Esophagus squamous epithelium (tissue), 5 donors: ENCODE measurements at regions of chr16 and their contacts with region 1.

Region 1: GRCh38 chr16:12067714-12068401 is 91.3 kb downstream of the SNX29 start:
- DNase-seq: no peak
- H3K4me3 ChIP-seq: no peak overlapping the region
- H3K27ac ChIP-seq: no peak overlapping the region
- H3K4me1 ChIP-seq: peaks cover 6 to 17% (median 9%) of the 10 kb centered on the region in 3 donors
- H3K27me3 ChIP-seq: no peaks in the 10 kb centered on the region
- CTCF ChIP-seq: peak; percentile 64 to 97 (median 94)
- POLR2A ChIP-seq: no peak

Region 2: DNA sequence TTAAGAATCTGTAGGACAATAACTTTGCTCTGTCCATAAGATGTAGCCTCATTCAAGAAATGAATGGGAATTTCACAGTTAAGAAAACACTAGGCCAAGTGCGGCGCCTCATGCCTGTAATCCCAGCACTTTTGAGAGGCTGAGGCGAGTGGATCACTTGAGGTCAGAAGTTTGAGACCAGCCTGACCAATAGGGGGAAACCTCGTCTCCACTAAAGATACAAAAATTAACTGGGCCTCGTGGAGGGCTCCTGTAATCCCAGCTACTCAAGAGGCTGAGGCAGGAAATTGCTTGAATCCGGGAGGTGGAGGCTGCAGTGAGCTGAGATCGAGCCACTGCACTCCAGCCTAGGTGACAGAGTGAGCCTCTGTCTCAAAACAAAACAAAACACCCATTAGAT is 196.7 kb before region 1 on chr16:
- intact Hi-C with region 1: no loop called
- DNase-seq: no peak
- H3K4me3 ChIP-seq: no peak overlapping the region
- H3K27ac ChIP-seq: no peak overlapping the region
- H3K4me1 ChIP-seq: peaks cover 0 to 34% (median 9%) of the 10 kb centered on the region in 3 donors
- H3K27me3 ChIP-seq: no peaks in the 10 kb centered on the region
- CTCF ChIP-seq: no peak
- POLR2A ChIP-seq: no peak

Region 3: DNA sequence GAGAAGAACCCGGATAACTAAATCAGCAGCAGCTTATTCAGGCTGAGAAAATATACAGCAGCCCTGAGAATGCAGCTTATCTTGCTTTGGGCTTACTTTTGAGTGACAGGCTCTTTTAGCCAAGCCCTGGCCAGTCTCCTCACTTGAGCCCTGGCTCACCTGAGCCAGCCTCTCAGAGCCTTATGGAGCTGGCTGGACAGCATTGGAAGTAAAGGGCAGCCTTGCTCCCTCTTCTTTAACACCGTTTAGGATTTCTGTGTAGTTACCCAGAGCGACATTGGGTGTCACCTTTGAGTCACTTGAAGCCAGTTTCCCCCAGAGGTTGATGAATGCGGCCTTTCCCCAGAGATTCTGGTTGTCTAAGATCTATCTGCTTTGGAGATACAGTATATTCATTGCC is 118.3 kb before region 1 on chr16:
- intact Hi-C with region 1: loop called (anchors 5 kb)
- DNase-seq: no peak
- H3K4me3 ChIP-seq: no peak overlapping the region
- H3K27ac ChIP-seq: no peak overlapping the region
- H3K4me1 ChIP-seq: peaks cover 0 to 15% (median 0%) of the 10 kb centered on the region in 3 donors
- H3K27me3 ChIP-seq: no peaks in the 10 kb centered on the region
- CTCF ChIP-seq: peak in 5 of 6 experiments; percentile 16 to 54 (median 28)
- POLR2A ChIP-seq: no peak

Region 4: GRCh38 chr16:12141073-12141951 is 73.5 kb after region 1 on chr16:
- intact Hi-C with region 1: no loop called
- DNase-seq: no peak
- H3K4me3 ChIP-seq: no peak overlapping the region
- H3K27ac ChIP-seq: no peak overlapping the region
- H3K4me1 ChIP-seq: peaks cover 0 to 13% (median 3%) of the 10 kb centered on the region in 3 donors
- H3K27me3 ChIP-seq: no peaks in the 10 kb centered on the region
- CTCF ChIP-seq: no peak
- POLR2A ChIP-seq: no peak

Region 5: GRCh38 chr16:12188061-12188934 is 120.4 kb after region 1 on chr16:
- intact Hi-C with region 1: no loop called
- DNase-seq: no peak
- H3K4me3 ChIP-seq: no peak overlapping the region
- H3K27ac ChIP-seq: peak overlapping the region; percentile 34 to 77 (median 64)
- H3K4me1 ChIP-seq: peaks cover 0 to 59% (median 33%) of the 10 kb centered on the region in 3 donors
- H3K27me3 ChIP-seq: no peaks in the 10 kb centered on the region
- CTCF ChIP-seq: no peak
- POLR2A ChIP-seq: no peak

Region 6: GRCh38 chr16:12484972-12485371 is 417.1 kb after region 1 on chr16:
- intact Hi-C with region 1: no loop called
- DNase-seq: no peak
- H3K4me3 ChIP-seq: no peak overlapping the region
- H3K27ac ChIP-seq: no peak overlapping the region
- H3K4me1 ChIP-seq: peaks cover 0 to 9% (median 0%) of the 10 kb centered on the region in 3 donors
- H3K27me3 ChIP-seq: no peaks in the 10 kb centered on the region
- CTCF ChIP-seq: no peak
- POLR2A ChIP-seq: no peak